Calu3 (cell line): ENCODE measurements at regions of chrX and their contacts with region 1.

Region 1: GRCh38 chrX:50805276-50805675 is 8.7 kb downstream of the SHROOM4 start:
- DNase-seq: no peak
- H3K4me3 Mint-ChIP-seq: no peak overlapping the region
- H3K27ac Mint-ChIP-seq: no peak overlapping the region
- H3K4me1 Mint-ChIP-seq: peaks cover 11% of the 10 kb centered on the region
- H3K27me3 Mint-ChIP-seq: no peaks in the 10 kb centered on the region
- CTCF ChIP-seq: no peak

Region 2: GRCh38 chrX:50779694-50780093 is 25.6 kb before region 1 on chrX:
- CTCF ChIA-PET with region 1: no interaction called
- intact Hi-C with region 1: loop called (anchors 2 kb)
- DNase-seq: no peak
- H3K4me3 Mint-ChIP-seq: no peak overlapping the region
- H3K27ac Mint-ChIP-seq: no peak overlapping the region
- H3K4me1 Mint-ChIP-seq: no peaks in the 10 kb centered on the region
- H3K27me3 Mint-ChIP-seq: no peaks in the 10 kb centered on the region
- CTCF ChIP-seq: no peak